Ovary (tissue), 10 donors: ENCODE measurements at regions of chr19 and their contacts with region 1.

Region 1: DNA sequence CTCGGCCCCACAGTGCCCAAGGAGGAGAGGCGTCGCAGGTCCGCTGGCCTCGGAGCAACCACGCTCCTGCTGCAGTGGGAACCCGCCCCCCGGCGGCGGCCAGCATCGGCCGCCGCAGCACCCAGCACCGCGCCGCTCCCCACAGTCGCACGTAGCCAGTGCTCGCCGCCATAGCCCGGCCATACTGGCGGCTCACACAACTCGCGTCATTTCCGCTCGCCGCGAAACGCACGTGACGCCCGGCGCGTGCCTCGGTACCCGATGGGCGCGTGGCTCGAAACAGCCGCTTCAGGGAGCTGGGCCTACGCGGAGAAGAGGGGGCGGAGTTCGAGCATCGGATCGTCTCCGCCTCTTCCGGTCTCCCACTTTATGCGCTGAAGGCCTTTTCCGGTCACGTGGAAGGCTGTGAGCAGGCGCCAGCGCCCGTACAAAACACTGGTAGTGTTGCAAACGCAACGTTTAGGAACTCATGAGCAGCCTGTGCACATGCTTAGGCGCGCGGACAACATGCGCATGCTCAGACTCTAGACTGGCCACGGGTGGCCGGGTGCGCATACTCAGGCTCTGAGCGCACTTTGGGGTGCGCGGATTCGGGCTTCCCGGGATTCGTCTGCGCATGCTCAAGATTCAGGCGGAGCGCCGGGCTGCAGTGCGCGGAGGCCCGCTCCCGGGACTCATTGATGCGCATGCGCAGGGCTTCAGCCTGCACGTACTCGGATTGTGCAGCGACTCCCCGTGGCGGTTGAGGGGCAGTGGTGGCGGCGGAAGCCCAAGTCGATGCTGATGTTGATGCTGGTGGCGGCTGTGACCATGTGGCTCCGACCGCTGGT is at the starts of genes CATSPERD and LONP1:
- DNase-seq: peak; percentile 97 to 99 (median 98)
- H3K4me3 ChIP-seq: peak within 1 kb of the TSS; percentile 70
- H3K27ac ChIP-seq: peak within 1 kb of the TSS; percentile 70 to 88
- H3K4me1 ChIP-seq: peaks cover 7% of the 10 kb centered on the region
- H3K27me3 ChIP-seq: no peaks in the 10 kb centered on the region
- CTCF ChIP-seq: peak; percentile 87 to 99 (median 97)
- EP300 ChIP-seq: peak; percentile 86
- POLR2A ChIP-seq: peak; percentile 66
- total RNA-seq, gene CATSPERD: 0.67 to 4.5 TPM in 2 of 7 donors, not detected in the others
- total RNA-seq, gene LONP1: 33.9 to 77.2 (median 56.1) TPM

Region 2: GRCh38 chr19:5586300-5587070 is 133.7 kb before region 1 on chr19:
- intact Hi-C with region 1: loop called in 1 of 4 experiments (anchors 1 kb)
- DNase-seq: no peak
- H3K4me3 ChIP-seq: no peak overlapping the region
- H3K27ac ChIP-seq: no peak overlapping the region
- H3K4me1 ChIP-seq: no peaks in the 10 kb centered on the region
- H3K27me3 ChIP-seq: no peaks in the 10 kb centered on the region
- CTCF ChIP-seq: no peak
- EP300 ChIP-seq: no peak
- POLR2A ChIP-seq: no peak

Region 3: DNA sequence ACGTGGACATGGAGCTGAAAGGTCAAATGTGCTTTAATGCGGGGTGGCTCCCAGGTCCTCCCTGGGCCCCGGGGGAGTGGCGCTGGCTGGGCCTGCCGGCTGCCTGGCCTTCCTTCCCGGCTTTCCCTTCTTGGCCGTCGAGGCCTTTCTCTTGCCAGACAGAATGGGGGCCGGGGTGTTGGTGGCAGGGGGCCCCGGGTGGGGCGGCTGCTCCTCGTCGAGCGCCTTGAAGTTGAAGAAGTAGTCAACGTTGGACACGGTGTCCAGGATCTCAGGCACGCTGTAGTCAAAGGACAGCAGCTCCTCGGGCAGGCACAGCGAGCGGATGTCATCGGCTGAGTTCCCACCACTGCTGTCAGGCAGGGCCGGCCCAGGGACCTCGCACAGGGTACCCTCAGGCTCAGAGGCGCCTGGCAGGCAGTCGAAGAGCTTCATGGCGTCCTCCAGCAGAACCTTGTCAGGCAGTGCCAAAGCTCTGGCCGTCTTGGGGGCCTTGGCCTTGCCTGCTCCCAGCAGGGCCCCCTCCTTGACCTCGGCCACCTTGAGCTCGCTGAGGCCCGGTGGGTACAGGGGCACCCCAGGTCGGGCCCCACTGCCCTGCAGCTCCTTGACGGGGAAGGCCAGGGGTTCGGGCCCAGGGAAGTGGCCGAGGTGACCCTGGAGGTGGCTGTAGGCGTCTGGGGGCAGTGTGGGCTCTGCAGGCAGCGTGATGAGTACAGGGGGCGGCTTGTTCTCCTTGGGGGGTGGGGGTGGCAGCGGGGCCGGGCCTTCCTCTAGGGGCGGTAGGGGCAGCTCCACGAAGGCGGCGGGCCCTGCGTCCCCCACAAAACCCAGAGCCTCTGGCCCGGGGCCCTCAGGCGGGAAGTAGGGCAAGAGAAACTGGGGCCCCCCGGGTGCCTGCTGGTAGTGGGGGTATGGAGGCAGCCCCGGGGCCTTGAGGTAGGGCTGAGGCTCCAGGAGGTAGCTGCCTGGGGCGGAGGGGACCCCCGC is 63.1 kb after region 1 on chr19:
- intact Hi-C with region 1: no loop called
- DNase-seq: peak in 1 of 5 donors; percentile 25
- H3K4me3 ChIP-seq: no peak overlapping the region
- H3K27ac ChIP-seq: no peak overlapping the region
- H3K4me1 ChIP-seq: no peaks in the 10 kb centered on the region
- H3K27me3 ChIP-seq: no peaks in the 10 kb centered on the region
- CTCF ChIP-seq: no peak
- EP300 ChIP-seq: no peak
- POLR2A ChIP-seq: no peak

Region 4: DNA sequence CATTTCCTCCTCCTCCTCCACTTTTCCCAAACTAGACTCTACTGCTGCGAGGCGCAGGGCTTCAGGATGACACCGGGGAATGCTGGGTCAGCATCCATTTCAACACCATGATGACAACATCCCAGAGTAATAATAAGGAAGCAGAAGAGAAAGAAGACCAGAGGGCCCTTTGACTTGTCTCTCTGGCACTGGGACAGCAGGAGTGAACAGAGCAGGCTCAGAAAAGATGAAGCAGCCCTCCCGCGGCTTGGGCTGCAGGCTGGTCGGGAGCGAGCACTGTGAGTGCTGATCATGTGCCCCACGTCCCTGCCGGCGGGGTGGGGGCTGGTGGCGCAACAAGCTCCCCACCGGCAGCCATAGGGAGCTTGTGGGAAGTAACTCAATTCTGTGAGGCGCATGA is 227.3 kb after region 1 on chr19:
- intact Hi-C with region 1: no loop called
- DNase-seq: peak in 1 of 5 donors; percentile 61
- H3K4me3 ChIP-seq: no peak overlapping the region
- H3K27ac ChIP-seq: no peak overlapping the region
- H3K4me1 ChIP-seq: peaks cover 11% of the 10 kb centered on the region
- H3K27me3 ChIP-seq: no peaks in the 10 kb centered on the region
- CTCF ChIP-seq: no peak
- EP300 ChIP-seq: no peak
- POLR2A ChIP-seq: no peak